ENCODE measurements at regions of chr12 and their contacts with region 1.

Region 1: DNA sequence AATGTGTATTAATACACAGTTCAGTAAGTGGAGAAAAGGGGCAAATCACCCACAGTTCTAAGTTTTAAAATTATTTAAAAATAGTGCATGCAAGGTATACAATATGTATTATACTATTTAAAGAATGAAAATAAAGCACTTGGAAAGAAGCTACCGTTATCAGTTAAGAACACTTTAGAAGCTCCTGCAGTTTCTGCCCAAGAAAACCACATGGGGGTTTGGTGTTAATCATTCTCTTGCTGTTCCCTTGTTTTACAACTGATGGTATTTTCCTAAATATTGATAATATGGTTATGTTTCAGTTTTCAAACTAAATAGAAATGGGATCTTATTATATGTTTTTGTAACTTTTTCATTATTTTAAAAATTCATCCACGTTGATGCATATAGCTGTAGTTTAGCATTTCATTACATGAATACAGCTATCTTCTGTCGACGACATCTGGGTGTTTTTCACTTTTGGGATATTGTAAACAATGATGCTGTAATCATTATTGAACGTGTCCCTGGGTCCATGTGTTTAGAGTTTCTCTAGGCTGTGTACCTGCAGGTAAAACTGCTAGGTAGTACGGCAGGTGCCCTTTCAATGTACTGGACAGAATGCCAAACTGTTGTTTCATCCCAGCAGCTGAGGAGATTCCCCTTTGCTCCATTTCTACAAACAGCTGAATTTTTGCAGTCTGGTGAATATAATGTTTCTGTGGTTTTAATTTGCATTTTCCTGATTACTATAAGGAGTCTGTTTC is 64.1 kb downstream of the APPL2 start:
- DNase-seq: no peak
- ATAC-seq: no peak
- H3K4me3 ChIP-seq: no peak overlapping the region
- H3K27ac ChIP-seq: no peak overlapping the region
- H3K4me1 ChIP-seq: no peaks in the 10 kb centered on the region
- H3K27me3 ChIP-seq: no peaks in the 10 kb centered on the region
- CTCF ChIP-seq: no peak

Region 2: GRCh38 chr12:105120551-105120950 is 51.3 kb before region 1 on chr12:
- intact Hi-C with region 1: loop called in 3 of 10 experiments (anchors 10 kb)
- DNase-seq: no peak
- ATAC-seq: no peak
- H3K4me3 ChIP-seq: no peak overlapping the region
- H3K27ac ChIP-seq: no peak overlapping the region
- H3K4me1 ChIP-seq: no peaks in the 10 kb centered on the region
- H3K27me3 ChIP-seq: no peaks in the 10 kb centered on the region
- CTCF ChIP-seq: no peak

Region 3: GRCh38 chr12:105204916-105205315 is 33.1 kb after region 1 on chr12:
- intact Hi-C with region 1: no loop called
- DNase-seq: no peak
- ATAC-seq: peak in 1 of 8 donors; percentile 27
- H3K4me3 ChIP-seq: no peak overlapping the region
- H3K27ac ChIP-seq: no peak overlapping the region
- H3K4me1 ChIP-seq: peaks cover 0 to 9% (median 3%) of the 10 kb centered on the region in 9 donors
- H3K27me3 ChIP-seq: no peaks in the 10 kb centered on the region
- CTCF ChIP-seq: no peak

Measured in heart right ventricle (tissue), 16 donors.